Activated B cell treated with CpG ODN at 0.5 μM for 24 hours (primary cell): ENCODE measurements at regions of chr16 and their contacts with region 1.

Region 1: GRCh38 chr16:47460711-47461597 is at the starts of genes ITFG1 and PHKB:
- DNase-seq: peak; percentile 95
- ATAC-seq: peak; percentile 90
- H3K4me3 Mint-ChIP-seq: peak within 1 kb of the TSS; percentile 98
- H3K27ac Mint-ChIP-seq: peak within 1 kb of the TSS; percentile 96
- H3K4me1 Mint-ChIP-seq: peaks cover 68% of the 10 kb centered on the region
- H3K27me3 Mint-ChIP-seq: no peaks in the 10 kb centered on the region
- CTCF ChIP-seq: no peak
- total RNA-seq, gene ITFG1: 23.8 and 30.9 TPM in 2 replicates
- total RNA-seq, gene PHKB: 94.8 and 110 TPM in 2 replicates

Region 2: DNA sequence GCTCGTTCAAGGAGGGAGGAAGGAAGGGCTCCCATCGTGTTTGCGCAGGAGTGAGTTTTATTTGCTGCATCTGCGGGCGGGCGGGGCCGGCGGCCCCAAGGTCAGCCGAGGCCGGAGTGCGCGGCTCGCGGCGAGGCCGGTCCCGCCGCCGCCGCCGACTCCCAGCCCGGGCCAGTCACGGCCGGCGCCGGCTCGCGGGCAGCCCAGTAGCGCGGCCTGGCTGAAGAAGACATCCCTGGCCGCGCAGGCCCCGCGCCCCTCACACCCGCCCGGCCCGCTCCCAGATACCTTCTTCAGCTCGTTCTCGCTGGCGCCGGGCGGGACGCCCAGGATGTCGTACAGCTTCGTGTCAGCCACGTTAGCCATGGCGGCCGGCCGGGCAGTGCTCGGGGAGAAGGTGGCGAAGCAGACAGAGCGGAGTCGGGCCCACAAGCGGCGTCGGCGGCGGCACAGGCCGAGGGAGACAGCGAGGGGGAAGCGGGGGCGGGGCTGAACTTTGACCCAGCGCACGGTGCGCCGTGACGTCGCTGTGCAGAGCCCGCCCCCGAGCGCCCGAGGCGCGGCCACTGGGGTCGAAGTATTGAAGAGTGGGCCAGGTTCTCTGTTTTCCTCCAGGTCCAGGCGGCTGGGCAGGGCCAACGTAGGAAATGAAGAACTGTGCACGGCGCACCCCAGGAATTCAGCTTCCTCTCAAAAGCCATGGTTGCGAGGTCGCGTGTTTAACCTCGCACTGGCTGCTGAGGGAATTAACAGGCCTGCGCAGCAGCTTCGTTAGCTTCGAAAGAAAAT is 487.6 kb before region 1 on chr16 and contains the start of gene DNAJA2:
- CTCF ChIA-PET with region 1: no interaction called
- POLR2A ChIA-PET with region 1: interaction called, 4 read pairs
- intact Hi-C with region 1: loop called (anchors 1 kb)
- DNase-seq: peak; percentile 94
- ATAC-seq: peak; percentile 93
- H3K4me3 Mint-ChIP-seq: peak within 1 kb of the TSS; percentile 95
- H3K27ac Mint-ChIP-seq: peak within 1 kb of the TSS; percentile 98
- H3K4me1 Mint-ChIP-seq: peaks cover 44% of the 10 kb centered on the region
- H3K27me3 Mint-ChIP-seq: no peaks in the 10 kb centered on the region
- CTCF ChIP-seq: no peak
- total RNA-seq, gene DNAJA2: 54.4 and 57.1 TPM in 2 replicates

Region 3: DNA sequence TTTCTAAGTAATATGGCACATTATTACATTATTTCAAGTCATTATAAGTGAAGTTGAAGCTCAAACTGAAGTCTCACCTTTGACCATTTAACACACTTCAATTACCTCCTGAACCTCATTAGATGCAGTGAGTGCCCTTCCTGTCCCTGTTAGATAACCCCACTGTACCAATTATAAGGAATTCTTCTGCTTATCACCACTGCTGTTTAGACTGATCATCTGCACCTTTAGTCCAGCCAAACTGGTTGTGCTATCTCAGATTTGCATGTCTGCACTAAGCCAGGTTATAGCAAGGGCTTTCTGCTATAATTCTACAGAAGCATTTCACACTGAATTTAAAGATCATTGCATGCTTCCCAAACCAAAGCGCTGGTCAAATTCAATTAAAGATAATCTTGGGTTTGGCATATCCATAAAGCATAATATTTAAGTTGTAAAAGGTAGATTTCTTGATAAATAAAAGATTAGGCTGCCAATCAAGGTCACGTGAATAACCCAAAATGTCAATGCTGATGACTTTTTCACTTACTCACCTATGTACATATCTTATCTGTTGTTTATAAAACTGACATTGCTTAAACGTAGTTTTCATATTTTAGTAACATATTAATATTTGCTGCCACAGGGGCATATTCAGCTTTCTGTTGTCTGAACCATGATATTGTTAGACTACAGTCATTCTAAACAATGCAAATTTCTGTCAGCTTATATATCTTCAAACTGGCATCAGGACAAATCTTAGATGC is 12.0 kb before region 1 on chr16:
- CTCF ChIA-PET with region 1: no interaction called
- POLR2A ChIA-PET with region 1: interaction called, 13 read pairs
- intact Hi-C with region 1: no loop called
- DNase-seq: no peak
- ATAC-seq: no peak
- H3K4me3 Mint-ChIP-seq: no peak overlapping the region
- H3K27ac Mint-ChIP-seq: no peak overlapping the region
- H3K4me1 Mint-ChIP-seq: peaks cover 4% of the 10 kb centered on the region
- H3K27me3 Mint-ChIP-seq: no peaks in the 10 kb centered on the region
- CTCF ChIP-seq: no peak

Region 4: GRCh38 chr16:47492428-47493377 is 31.7 kb after region 1 on chr16:
- CTCF ChIA-PET with region 1: interaction called, 15 read pairs
- POLR2A ChIA-PET with region 1: interaction called, 97 read pairs
- intact Hi-C with region 1: loop called (anchors 1 kb)
- DNase-seq: peak; percentile 53
- ATAC-seq: peak; percentile 91
- H3K4me3 Mint-ChIP-seq: peak overlapping the region; percentile 89
- H3K27ac Mint-ChIP-seq: peak overlapping the region; percentile 98
- H3K4me1 Mint-ChIP-seq: peaks cover 52% of the 10 kb centered on the region
- H3K27me3 Mint-ChIP-seq: no peaks in the 10 kb centered on the region
- CTCF ChIP-seq: no peak

Region 5: GRCh38 chr16:47574091-47575054 is 113.4 kb after region 1 on chr16:
- CTCF ChIA-PET with region 1: no interaction called
- POLR2A ChIA-PET with region 1: no interaction called
- intact Hi-C with region 1: loop called (anchors 2 kb)
- DNase-seq: no peak
- ATAC-seq: peak; percentile 21
- H3K4me3 Mint-ChIP-seq: peak overlapping the region; percentile 25
- H3K27ac Mint-ChIP-seq: peak overlapping the region; percentile 74
- H3K4me1 Mint-ChIP-seq: peaks cover 44% of the 10 kb centered on the region
- H3K27me3 Mint-ChIP-seq: no peaks in the 10 kb centered on the region
- CTCF ChIP-seq: no peak

Region 6: GRCh38 chr16:47657032-47657431 is 196.1 kb after region 1 on chr16:
- CTCF ChIA-PET with region 1: no interaction called
- POLR2A ChIA-PET with region 1: no interaction called
- intact Hi-C with region 1: loop called (anchors 10 kb)
- DNase-seq: no peak
- ATAC-seq: no peak
- H3K4me3 Mint-ChIP-seq: no peak overlapping the region
- H3K27ac Mint-ChIP-seq: no peak overlapping the region
- H3K4me1 Mint-ChIP-seq: no peaks in the 10 kb centered on the region
- H3K27me3 Mint-ChIP-seq: no peaks in the 10 kb centered on the region
- CTCF ChIP-seq: no peak

Region 7: DNA sequence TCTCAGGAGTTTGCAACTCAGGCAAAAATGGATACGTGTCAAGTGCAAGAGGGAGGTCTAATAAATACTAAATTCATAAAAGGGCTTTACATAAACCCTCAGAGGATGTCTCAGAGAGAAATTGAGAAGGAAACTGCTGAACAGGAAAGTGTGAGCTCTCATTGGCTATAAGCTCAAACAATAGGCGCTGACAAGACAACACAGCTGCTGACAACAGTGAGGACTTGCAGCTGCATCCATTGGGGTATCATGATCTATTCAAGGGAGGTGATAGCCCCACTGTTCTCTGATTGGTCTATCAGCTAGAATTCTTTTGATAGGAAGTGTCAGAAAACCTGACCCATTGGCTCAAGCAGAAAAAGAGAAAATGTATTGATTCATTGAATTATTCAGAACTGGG is 1633.5 kb after region 1 on chr16:
- CTCF ChIA-PET with region 1: no interaction called
- POLR2A ChIA-PET with region 1: no interaction called
- intact Hi-C with region 1: no loop called
- DNase-seq: no peak
- ATAC-seq: no peak
- H3K4me3 Mint-ChIP-seq: no peak overlapping the region
- H3K27ac Mint-ChIP-seq: no peak overlapping the region
- H3K4me1 Mint-ChIP-seq: no peaks in the 10 kb centered on the region
- H3K27me3 Mint-ChIP-seq: no peaks in the 10 kb centered on the region
- CTCF ChIP-seq: no peak